Calu3 (cell line): ENCODE measurements at regions of chr17 and their contacts with region 1.

Region 1: DNA sequence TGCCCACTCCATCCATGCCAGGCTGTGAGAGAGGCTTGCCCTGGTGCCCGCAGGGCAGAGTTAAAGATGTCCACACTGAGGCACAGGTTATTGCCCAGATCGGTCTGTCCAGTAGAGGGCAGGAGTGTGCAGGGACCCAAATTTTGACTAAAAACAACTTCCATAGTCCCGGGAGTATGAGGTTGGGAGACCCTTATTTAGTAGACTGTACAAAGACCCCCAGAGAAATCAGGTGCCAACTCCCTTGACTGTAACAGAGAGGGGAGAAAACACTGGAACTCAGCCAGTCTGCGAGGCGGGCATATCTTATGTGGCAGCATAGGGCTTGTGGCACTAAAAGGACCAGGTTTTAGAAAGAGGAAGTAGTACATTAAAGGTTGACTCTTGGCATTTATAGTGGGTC is 43.4 kb downstream of the HNF1B start:
- DNase-seq: peak; percentile 93
- H3K4me3 Mint-ChIP-seq: peak overlapping the region; percentile 2
- H3K27ac Mint-ChIP-seq: peak overlapping the region; percentile 52
- H3K4me1 Mint-ChIP-seq: peaks cover 95% of the 10 kb centered on the region
- H3K27me3 Mint-ChIP-seq: no peaks in the 10 kb centered on the region
- CTCF ChIP-seq: peak; percentile 99

Region 2: DNA sequence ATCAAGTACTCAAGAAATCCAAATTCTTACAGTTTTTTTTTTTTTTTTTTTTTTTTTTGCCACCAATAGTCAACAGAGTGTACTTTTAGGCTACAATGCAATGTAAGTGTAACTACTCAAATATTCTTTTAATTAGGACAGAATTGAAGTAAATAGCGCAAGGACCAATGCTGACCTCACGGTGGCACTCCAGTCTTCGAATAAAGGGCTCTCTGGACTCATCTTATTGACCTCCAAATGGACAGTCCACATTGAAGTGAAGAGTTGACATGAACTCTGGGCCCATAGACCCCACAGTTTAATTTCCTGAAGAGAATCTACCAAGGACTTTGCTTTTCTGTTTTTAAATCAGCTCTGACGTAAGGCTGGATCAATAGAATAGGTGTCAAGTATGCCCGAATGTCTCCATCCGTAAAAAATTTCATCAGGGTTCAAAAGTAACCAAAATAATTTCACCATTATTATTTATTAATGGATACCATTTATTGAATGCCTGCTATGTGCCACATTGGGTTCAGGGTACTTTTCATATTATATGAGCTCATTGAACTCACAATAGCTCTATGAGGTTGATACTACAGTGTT is 51.0 kb before region 1 on chr17:
- CTCF ChIA-PET with region 1: interaction called, 7 read pairs
- intact Hi-C with region 1: loop called (anchors 1 kb)
- DNase-seq: peak; percentile 80
- H3K4me3 Mint-ChIP-seq: no peak overlapping the region
- H3K27ac Mint-ChIP-seq: no peak overlapping the region
- H3K4me1 Mint-ChIP-seq: peaks cover 17% of the 10 kb centered on the region
- H3K27me3 Mint-ChIP-seq: peaks cover 2% of the 10 kb centered on the region
- CTCF ChIP-seq: peak; percentile 85

Region 3: DNA sequence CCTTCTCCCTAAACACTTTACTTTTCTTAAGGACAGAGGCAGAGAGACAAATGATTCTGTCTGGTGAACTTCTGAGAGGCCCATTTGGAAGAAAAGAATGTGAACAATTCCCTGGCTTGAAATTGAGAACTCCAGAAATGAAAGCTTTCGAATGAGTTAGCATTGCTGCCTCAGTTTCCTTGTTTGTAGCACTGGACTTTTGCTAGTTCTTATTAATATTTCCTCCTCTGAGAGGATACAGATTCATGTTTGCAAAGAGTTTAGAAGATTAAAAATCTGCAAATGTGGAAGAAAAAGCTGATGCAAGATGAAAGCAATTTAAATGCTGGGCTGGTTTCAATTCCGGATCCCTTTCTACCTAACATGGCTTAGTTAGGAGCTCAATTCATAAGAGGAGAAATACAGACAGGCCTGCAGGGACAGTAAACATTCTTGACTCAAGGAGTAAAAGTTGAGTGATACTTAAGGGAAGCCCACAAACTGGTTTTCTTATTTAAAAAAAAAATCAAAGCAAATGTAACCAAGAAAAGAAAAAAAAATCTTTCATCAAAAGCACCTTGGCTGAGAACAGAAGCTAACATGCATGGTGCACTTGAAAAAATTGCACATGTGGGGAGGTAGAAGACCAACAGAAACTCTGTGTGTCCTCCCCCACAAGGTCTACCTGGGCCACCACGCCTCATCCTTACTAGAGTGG is 16.3 kb after region 1 on chr17:
- CTCF ChIA-PET with region 1: interaction called, 35 read pairs
- intact Hi-C with region 1: no loop called
- DNase-seq: no peak
- H3K4me3 Mint-ChIP-seq: peak overlapping the region; percentile 17
- H3K27ac Mint-ChIP-seq: peak overlapping the region; percentile 85
- H3K4me1 Mint-ChIP-seq: peaks cover 86% of the 10 kb centered on the region
- H3K27me3 Mint-ChIP-seq: no peaks in the 10 kb centered on the region
- CTCF ChIP-seq: no peak

Region 4: DNA sequence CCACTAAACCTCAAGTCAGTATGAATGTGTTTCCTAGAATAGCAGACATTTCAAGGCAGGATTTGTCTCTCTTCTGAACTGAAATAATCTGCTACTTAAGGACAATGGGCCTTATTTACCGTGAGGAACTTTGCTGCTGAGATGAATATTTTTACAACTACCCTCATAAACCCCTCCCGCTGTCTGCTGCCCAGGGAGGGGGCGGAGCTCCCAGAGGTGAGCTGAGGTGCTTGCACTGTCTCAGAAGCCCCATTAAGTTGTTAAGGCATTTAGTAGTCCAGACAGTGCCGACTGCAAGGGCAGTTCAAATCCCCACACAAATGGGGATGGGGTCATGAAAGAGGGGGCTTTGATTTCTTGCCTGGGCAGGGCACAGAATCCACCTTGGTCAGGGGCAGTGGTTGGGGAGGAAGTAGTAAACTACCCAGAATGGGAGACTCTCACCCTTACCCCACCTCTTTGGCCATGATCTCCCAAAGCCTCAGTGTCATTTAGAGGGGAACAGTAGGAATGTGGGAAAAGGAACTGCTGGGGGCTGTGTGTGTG is 24.2 kb after region 1 on chr17:
- CTCF ChIA-PET with region 1: interaction called, 12 read pairs
- intact Hi-C with region 1: no loop called
- DNase-seq: no peak
- H3K4me3 Mint-ChIP-seq: no peak overlapping the region
- H3K27ac Mint-ChIP-seq: peak overlapping the region; percentile 63
- H3K4me1 Mint-ChIP-seq: peaks cover 69% of the 10 kb centered on the region
- H3K27me3 Mint-ChIP-seq: no peaks in the 10 kb centered on the region
- CTCF ChIP-seq: no peak

Region 5: DNA sequence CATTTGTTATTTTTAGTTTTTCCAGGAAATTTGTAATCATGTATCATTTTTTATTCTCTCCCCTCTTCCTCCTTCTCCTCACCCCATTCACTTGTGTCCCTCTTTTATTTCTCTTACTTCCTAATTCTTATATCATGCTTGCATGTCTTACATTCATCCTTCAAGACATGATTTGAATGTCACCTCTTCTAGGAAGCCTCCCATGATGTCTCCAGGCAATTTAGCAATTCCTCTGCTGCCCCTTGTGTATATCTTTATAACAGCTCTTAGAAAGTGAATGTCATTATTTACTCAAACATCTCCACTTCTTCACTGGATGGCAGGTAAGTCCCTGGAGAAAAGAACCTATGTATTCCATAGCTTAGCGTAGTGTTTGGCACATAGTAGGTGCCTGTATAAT is 35.6 kb after region 1 on chr17:
- CTCF ChIA-PET with region 1: interaction called, 27 read pairs
- intact Hi-C with region 1: no loop called
- DNase-seq: no peak
- H3K4me3 Mint-ChIP-seq: no peak overlapping the region
- H3K27ac Mint-ChIP-seq: peak overlapping the region; percentile 38
- H3K4me1 Mint-ChIP-seq: peaks cover 49% of the 10 kb centered on the region
- H3K27me3 Mint-ChIP-seq: no peaks in the 10 kb centered on the region
- CTCF ChIP-seq: peak; percentile 74

Region 6: DNA sequence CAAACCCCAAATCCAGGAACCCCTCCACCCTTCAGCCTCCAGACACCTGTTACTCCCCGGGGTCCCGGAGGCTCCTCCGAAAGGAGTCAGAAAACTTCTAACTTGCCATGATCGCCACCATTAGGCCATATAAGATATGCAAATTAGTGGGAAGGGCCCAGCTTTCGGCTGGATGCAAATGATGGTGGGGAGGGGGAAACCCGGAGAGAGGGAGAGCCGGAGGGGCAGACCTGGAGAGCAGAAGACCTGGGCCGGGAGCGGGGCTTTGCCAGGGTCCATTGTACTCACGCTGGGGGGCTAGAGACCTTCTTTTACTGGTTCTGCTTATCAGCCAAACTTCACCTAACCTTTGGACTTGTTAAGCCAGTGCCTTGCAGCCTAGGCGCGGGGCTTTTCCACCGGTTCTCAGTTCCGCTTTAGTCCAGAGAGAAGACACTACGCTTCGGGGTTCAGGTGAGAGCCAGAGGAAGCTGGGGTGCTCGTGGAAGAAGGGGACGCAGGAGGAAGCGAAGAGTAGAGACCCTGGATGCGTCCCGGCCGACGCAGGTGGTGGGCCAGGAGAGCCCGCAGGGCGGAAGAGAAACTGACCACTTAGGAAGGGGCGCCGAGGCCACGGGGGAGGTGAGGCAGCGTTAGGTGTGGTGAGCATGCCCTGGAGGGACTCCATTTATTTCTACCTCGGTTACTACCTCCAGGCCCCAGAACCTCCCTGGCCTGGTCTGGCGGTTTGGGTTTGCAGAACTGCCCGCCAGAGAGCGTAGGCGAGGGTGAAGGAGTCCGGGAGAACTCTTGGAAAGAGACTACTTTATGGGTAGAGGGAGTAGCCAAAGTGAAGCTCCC is 43.7 kb after region 1 on chr17 and contains the start of gene HNF1B:
- CTCF ChIA-PET with region 1: interaction called, 37 read pairs
- intact Hi-C with region 1: loop called (anchors 1 kb)
- DNase-seq: peak; percentile 97
- H3K4me3 Mint-ChIP-seq: peak within 1 kb of the TSS; percentile 100
- H3K27ac Mint-ChIP-seq: peak within 1 kb of the TSS; percentile 99
- H3K4me1 Mint-ChIP-seq: peaks cover 39% of the 10 kb centered on the region
- H3K27me3 Mint-ChIP-seq: no peaks in the 10 kb centered on the region
- CTCF ChIP-seq: peak; percentile 10
- total RNA-seq, gene HNF1B: 127 and 130 TPM in 2 replicates

Region 7: GRCh38 chr17:37791447-37792399 is 90.2 kb after region 1 on chr17:
- CTCF ChIA-PET with region 1: interaction called, 10 read pairs
- intact Hi-C with region 1: no loop called
- DNase-seq: peak; percentile 71
- H3K4me3 Mint-ChIP-seq: no peak overlapping the region
- H3K27ac Mint-ChIP-seq: no peak overlapping the region
- H3K4me1 Mint-ChIP-seq: peaks cover 19% of the 10 kb centered on the region
- H3K27me3 Mint-ChIP-seq: peaks cover 45% of the 10 kb centered on the region
- CTCF ChIP-seq: peak; percentile 98